Activated CD4-positive, alpha-beta T cell treated with anti-CD3 and anti-CD28 coated beads for 36 hours (primary cell): ENCODE measurements at regions of chr3 and their contacts with region 1.

Region 1: GRCh38 chr3:59386165-59386564 is 336.3 kb upstream of the CFAP20DC start:
- DNase-seq: no peak
- ATAC-seq: peak; percentile 28
- H3K4me3 Mint-ChIP-seq: peak overlapping the region; percentile 31
- H3K27ac Mint-ChIP-seq: peak overlapping the region; percentile 99
- H3K4me1 Mint-ChIP-seq: peaks cover 86% of the 10 kb centered on the region
- H3K27me3 Mint-ChIP-seq: no peaks in the 10 kb centered on the region

Region 2: DNA sequence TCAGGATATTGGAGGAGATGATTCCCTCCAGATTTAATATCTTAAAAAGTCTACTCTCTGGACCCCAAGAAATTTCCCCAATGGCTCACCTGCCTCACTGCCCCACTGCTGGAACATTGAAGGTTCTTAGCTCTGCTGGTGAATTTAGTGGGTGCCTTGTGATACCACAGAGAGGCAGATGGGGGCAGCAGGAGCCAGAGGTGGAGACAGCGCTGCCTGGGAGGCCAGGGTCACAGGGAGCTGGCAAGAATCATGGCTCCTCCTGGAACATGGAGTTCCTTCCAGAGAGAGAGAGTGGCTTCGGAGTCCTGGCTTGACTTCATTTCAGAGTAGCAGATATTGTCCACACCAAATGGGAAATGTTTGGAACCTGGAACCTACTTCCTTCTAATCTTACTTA is 72.8 kb before region 1 on chr3:
- CTCF ChIA-PET with region 1: interaction called, 5 read pairs
- POLR2A ChIA-PET with region 1: no interaction called
- intact Hi-C with region 1: loop called in 1 of 2 experiments (anchors 5 kb)
- DNase-seq: peak; percentile 74
- ATAC-seq: peak; percentile 86
- H3K4me3 Mint-ChIP-seq: no peak overlapping the region
- H3K27ac Mint-ChIP-seq: no peak overlapping the region
- H3K4me1 Mint-ChIP-seq: peaks cover 17% of the 10 kb centered on the region
- H3K27me3 Mint-ChIP-seq: no peaks in the 10 kb centered on the region

Region 3: DNA sequence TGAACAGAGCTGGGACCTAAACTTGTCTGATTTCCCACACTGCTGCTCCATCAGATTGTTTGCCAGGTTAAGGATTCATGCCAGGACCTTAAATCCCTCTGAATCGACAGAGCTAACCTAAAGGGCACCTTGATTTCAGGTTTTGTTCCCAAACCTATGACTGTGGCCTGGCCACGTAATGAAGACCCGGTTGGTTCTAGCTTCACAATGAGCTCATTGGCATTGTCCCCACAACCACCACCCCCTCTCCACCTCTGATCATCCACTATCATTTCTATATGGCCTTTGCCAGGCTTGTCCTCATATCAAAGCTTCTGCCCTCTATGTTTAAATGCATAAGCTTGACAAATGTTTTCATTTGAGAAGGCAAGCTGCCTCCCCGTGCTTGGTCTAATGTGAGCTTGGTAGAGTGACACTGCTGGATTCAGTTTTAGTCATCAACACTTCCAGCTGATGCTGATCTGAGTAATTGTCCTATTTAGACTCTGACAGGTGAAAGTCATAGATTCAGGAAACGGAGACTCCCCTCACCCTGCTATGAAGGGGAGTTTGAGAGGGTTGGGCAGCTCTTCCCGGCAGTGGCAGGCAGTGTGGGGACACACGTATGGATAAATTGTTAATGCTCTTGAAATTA is 70.8 kb after region 1 on chr3:
- CTCF ChIA-PET with region 1: no interaction called
- POLR2A ChIA-PET with region 1: no interaction called
- intact Hi-C with region 1: loop called in 1 of 2 experiments (anchors 1 kb)
- DNase-seq: peak; percentile 70
- ATAC-seq: peak; percentile 96
- H3K4me3 Mint-ChIP-seq: no peak overlapping the region
- H3K27ac Mint-ChIP-seq: no peak overlapping the region
- H3K4me1 Mint-ChIP-seq: peaks cover 40% of the 10 kb centered on the region
- H3K27me3 Mint-ChIP-seq: no peaks in the 10 kb centered on the region

Region 4: DNA sequence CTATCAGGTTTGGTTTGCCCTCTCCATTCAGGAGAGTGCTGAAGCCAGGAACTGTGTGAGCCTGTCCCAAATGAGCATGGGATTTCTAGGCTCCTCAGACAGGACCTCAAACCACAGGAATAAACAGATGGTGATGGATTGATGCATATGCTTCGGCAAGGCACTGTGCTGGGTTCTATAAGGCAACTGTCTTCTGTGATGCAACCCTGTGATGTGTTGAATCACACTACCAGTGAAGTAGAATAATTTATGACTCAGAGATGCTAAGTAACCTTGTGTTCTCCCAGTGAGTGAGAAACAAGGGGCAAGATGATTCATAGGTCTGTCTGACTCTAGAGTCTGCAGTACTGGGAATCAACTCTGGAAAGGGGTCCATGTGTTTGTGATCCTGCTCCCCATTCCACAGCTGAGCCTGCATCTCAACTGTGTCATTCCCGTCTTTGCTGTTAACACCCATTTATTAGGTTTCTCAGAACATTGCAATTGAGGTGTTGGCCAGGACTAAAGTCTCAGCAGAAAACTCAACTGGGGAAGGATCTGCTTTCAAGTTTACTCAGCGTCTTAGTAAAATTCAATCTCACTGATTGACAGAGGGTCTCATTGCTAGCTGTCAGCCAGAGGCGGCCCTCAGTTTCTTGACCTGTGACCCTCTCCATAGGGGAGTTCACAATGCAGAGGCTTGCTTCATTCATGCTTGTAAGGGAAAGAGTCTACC is 173.7 kb after region 1 on chr3:
- CTCF ChIA-PET with region 1: no interaction called
- POLR2A ChIA-PET with region 1: no interaction called
- intact Hi-C with region 1: loop called (anchors 1 to 2 kb)
- DNase-seq: peak; percentile 67
- ATAC-seq: peak; percentile 92
- H3K4me3 Mint-ChIP-seq: no peak overlapping the region
- H3K27ac Mint-ChIP-seq: peak overlapping the region; percentile 93
- H3K4me1 Mint-ChIP-seq: peaks cover 37% of the 10 kb centered on the region
- H3K27me3 Mint-ChIP-seq: no peaks in the 10 kb centered on the region

Region 5: GRCh38 chr3:59857589-59858346 is 471.6 kb after region 1 on chr3:
- CTCF ChIA-PET with region 1: no interaction called
- POLR2A ChIA-PET with region 1: no interaction called
- intact Hi-C with region 1: loop called in 1 of 2 experiments (anchors 10 kb)
- DNase-seq: peak; percentile 89
- ATAC-seq: peak; percentile 97
- H3K4me3 Mint-ChIP-seq: peak overlapping the region; percentile 27
- H3K27ac Mint-ChIP-seq: peak overlapping the region; percentile 47
- H3K4me1 Mint-ChIP-seq: peaks cover 18% of the 10 kb centered on the region
- H3K27me3 Mint-ChIP-seq: no peaks in the 10 kb centered on the region

Region 6: DNA sequence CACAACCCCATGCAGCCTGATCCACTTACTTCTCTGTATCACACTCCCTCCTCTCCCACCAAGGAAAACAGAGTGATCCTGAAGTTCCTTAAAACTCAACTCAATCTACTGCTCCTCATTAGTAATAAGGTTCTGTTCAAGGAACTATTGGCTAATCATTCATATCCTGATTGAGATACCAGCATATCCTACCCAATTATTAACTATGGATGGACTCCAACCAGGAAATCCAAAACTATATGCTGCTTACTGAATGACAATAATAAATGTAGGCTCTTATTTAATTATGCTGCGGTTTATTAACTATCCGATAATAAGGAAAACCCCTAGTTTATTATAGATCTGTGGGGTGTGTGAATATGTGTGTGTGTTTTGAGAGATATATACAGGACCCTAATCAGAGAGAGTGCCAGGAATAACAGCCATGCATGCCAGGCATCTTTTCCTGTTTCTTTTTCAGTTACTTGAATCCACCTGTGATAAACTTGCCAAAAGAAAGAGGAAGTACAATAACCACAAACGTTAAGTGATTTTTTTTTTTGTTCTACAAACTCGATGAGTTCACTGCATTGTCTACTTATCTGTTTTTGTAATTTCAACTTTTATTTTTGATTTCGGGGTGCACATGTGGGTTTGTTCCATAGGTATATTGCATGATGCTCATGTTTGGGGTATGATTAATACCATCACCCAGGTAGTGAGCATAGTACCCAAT is 695.4 kb after region 1 on chr3:
- CTCF ChIA-PET with region 1: no interaction called
- POLR2A ChIA-PET with region 1: no interaction called
- intact Hi-C with region 1: loop called in 1 of 2 experiments (anchors 1 kb)
- DNase-seq: no peak
- ATAC-seq: no peak
- H3K4me3 Mint-ChIP-seq: peak overlapping the region; percentile 40
- H3K27ac Mint-ChIP-seq: peak overlapping the region; percentile 88
- H3K4me1 Mint-ChIP-seq: peaks cover 67% of the 10 kb centered on the region
- H3K27me3 Mint-ChIP-seq: no peaks in the 10 kb centered on the region